Activated CD4-positive, alpha-beta memory T cell treated with anti-CD3 and anti-CD28 coated beads for 36 hours (primary cell): ENCODE measurements at regions of chr3 and their contacts with region 1.

Region 1: GRCh38 chr3:5330152-5330810 is 142.8 kb downstream of the EDEM1 start:
- DNase-seq: peak; percentile 65
- H3K4me3 Mint-ChIP-seq: peak overlapping the region; percentile 36
- H3K27ac Mint-ChIP-seq: peak overlapping the region; percentile 59
- H3K4me1 Mint-ChIP-seq: peaks cover 32% of the 10 kb centered on the region
- H3K27me3 Mint-ChIP-seq: peaks cover 3% of the 10 kb centered on the region

Region 2: GRCh38 chr3:5226783-5227182 is 103.5 kb before region 1 on chr3:
- CTCF ChIA-PET with region 1: no interaction called
- POLR2A ChIA-PET with region 1: no interaction called
- intact Hi-C with region 1: loop called (anchors 10 kb)
- DNase-seq: no peak
- H3K4me3 Mint-ChIP-seq: no peak overlapping the region
- H3K27ac Mint-ChIP-seq: no peak overlapping the region
- H3K4me1 Mint-ChIP-seq: peaks cover 1% of the 10 kb centered on the region
- H3K27me3 Mint-ChIP-seq: no peaks in the 10 kb centered on the region

Region 3: GRCh38 chr3:5298453-5298852 is 31.8 kb before region 1 on chr3:
- CTCF ChIA-PET with region 1: no interaction called
- POLR2A ChIA-PET with region 1: no interaction called
- intact Hi-C with region 1: loop called (anchors 1 kb)
- DNase-seq: no peak
- H3K4me3 Mint-ChIP-seq: no peak overlapping the region
- H3K27ac Mint-ChIP-seq: no peak overlapping the region
- H3K4me1 Mint-ChIP-seq: peaks cover 5% of the 10 kb centered on the region
- H3K27me3 Mint-ChIP-seq: peaks cover 2% of the 10 kb centered on the region

Region 4: GRCh38 chr3:5312290-5312689 is 18.0 kb before region 1 on chr3:
- CTCF ChIA-PET with region 1: no interaction called
- POLR2A ChIA-PET with region 1: no interaction called
- intact Hi-C with region 1: loop called (anchors 1 kb)
- DNase-seq: peak; percentile 18
- H3K4me3 Mint-ChIP-seq: no peak overlapping the region
- H3K27ac Mint-ChIP-seq: peak overlapping the region; percentile 7
- H3K4me1 Mint-ChIP-seq: peaks cover 9% of the 10 kb centered on the region
- H3K27me3 Mint-ChIP-seq: no peaks in the 10 kb centered on the region

Region 5: DNA sequence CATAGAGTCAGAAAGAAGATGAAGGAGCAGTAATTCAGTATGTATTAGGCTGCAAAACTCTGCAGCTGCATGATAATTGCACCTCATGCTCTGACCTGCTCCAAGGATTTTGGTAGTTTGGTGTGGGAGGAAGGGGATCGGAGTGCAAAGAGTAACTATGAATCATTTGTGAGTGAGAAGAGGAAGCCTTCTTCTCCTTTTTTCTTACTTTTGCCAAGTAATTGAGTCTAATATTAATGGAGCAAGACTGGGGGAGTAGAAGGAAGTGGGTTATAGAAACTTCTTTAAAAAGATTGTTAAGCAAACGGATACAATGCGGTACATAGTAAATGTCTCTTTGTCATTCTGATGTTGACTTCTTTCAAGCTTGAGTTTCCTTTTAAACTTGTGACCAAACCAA is 133.7 kb after region 1 on chr3:
- CTCF ChIA-PET with region 1: no interaction called
- POLR2A ChIA-PET with region 1: no interaction called
- intact Hi-C with region 1: no loop called
- DNase-seq: no peak
- H3K4me3 Mint-ChIP-seq: no peak overlapping the region
- H3K27ac Mint-ChIP-seq: no peak overlapping the region
- H3K4me1 Mint-ChIP-seq: no peaks in the 10 kb centered on the region
- H3K27me3 Mint-ChIP-seq: peaks cover 6% of the 10 kb centered on the region